B cell (primary cell): ENCODE measurements at regions of chr10 and their contacts with region 1.

Region 1: DNA sequence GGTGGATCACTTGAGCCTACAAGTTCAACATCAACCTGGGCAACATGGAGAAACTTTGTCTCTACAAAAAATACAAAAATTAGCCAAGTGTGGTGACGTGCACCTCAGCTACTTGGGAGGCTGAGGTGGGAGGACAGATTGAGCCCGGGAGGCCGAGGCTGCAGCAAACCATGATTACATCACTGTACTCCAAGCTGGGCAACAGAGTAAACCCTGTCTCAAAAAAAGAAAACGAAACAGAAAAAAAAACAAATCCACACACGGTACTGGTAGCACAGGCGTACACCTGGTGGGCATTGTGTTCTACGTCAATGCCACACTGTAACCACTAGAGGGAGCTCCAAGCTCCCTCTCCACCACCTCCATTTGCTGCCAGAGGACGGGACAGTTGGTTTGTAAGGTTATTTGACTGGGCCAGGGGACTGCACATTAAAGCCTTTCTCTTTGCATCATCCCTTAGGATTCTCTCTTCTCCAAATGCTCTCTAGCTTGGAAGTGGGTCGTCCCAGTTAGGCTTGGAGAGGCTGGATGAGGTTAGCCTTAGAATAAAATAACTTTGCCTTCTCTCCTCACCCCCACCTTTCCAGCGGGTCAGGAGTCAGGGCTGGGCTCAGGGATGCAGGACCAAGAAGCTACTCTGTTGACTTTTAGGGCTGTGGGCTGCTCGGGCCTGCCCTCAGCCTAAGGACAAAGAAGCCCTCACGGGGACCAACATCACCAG is 130.8 kb downstream of the SORBS1 start:
- DNase-seq: peak; percentile 75
- ATAC-seq: peak; percentile 87
- H3K4me3 ChIP-seq: no peak overlapping the region
- H3K4me3 Mint-ChIP-seq: no peak overlapping the region
- H3K27ac ChIP-seq: no peak overlapping the region
- H3K27ac Mint-ChIP-seq: no peak overlapping the region
- H3K4me1 ChIP-seq: peaks cover 0 to 5% of the 10 kb centered on the region in 2 donors
- H3K4me1 Mint-ChIP-seq: no peaks in the 10 kb centered on the region
- H3K27me3 ChIP-seq: peaks cover 0 to 2% (median 0%) of the 10 kb centered on the region in 4 experiments
- H3K27me3 Mint-ChIP-seq: peaks cover 15% of the 10 kb centered on the region
- CTCF ChIP-seq: peak; percentile 90

Region 2: DNA sequence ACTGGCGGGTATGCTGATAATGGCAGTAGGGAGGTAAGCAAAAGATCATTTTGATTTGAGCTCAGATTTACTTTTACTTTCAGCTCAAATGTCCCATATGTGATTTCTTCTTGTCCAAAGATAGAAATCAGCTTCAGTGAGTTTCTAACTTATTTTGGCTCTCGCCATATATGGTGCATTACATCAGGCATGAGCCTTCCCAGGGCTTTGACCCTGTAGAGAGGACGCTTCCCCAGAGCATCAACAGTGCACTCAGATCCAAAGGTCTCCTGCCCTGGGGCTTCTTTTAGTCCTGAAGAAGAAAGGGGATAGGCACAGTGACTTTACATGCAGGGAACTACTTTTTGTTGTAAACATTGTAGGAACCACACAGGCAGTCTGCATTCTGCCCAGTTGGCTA is 11.0 kb before region 1 on chr10:
- CTCF ChIA-PET with region 1: interaction called, 21 read pairs
- POLR2A ChIA-PET with region 1: no interaction called
- intact Hi-C with region 1: no loop called
- DNase-seq: no peak
- ATAC-seq: no peak
- H3K4me3 ChIP-seq: no peak overlapping the region
- H3K4me3 Mint-ChIP-seq: no peak overlapping the region
- H3K27ac ChIP-seq: no peak overlapping the region
- H3K27ac Mint-ChIP-seq: no peak overlapping the region
- H3K4me1 ChIP-seq: no peaks in the 10 kb centered on the region
- H3K4me1 Mint-ChIP-seq: no peaks in the 10 kb centered on the region
- H3K27me3 ChIP-seq: peaks cover 0 to 2% (median 0%) of the 10 kb centered on the region in 4 experiments
- H3K27me3 Mint-ChIP-seq: peaks cover 6% of the 10 kb centered on the region
- CTCF ChIP-seq: no peak

Region 3: DNA sequence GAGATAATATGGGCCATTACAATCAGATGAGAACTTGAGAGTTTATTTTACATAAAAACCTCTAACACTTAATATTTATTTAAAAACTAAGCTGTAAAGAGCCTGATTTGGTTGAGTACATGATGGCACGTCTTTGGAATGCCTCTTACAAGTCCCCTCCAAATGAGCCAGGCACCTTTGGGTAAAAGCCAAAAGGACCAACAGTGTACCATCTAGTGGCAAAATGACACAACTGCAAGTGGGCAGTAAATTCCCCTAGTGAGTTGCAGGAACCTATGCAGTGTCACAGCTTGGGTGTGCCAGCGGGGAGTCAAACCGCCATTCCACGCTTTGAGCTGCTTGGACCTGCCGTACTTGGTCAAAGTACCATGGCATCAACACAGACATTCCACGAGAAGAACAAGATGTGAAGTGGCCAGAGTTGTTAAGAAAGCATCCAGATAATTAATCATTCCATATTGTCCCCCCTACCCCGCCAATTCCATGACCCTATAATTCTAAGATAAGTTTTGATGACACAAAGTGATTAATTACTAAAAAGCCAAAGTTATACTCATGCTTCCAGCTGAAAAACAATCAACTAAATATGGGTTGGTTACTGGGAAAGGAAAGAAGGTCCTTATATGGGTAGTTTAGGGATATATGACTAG is 15.6 kb after region 1 on chr10:
- CTCF ChIA-PET with region 1: interaction called, 59 read pairs
- POLR2A ChIA-PET with region 1: no interaction called
- intact Hi-C with region 1: no loop called
- DNase-seq: peak; percentile 62
- ATAC-seq: peak; percentile 62
- H3K4me3 ChIP-seq: no peak overlapping the region
- H3K4me3 Mint-ChIP-seq: no peak overlapping the region
- H3K27ac ChIP-seq: no peak overlapping the region
- H3K27ac Mint-ChIP-seq: no peak overlapping the region
- H3K4me1 ChIP-seq: no peaks in the 10 kb centered on the region
- H3K4me1 Mint-ChIP-seq: no peaks in the 10 kb centered on the region
- H3K27me3 ChIP-seq: peaks cover 0 to 10% (median 1%) of the 10 kb centered on the region in 4 experiments
- H3K27me3 Mint-ChIP-seq: peaks cover 21% of the 10 kb centered on the region
- CTCF ChIP-seq: peak; percentile 86

Region 4: GRCh38 chr10:95451568-95452524 is 21.5 kb after region 1 on chr10:
- CTCF ChIA-PET with region 1: interaction called, 59 read pairs
- POLR2A ChIA-PET with region 1: no interaction called
- intact Hi-C with region 1: no loop called
- DNase-seq: no peak
- ATAC-seq: no peak
- H3K4me3 ChIP-seq: no peak overlapping the region
- H3K4me3 Mint-ChIP-seq: no peak overlapping the region
- H3K27ac ChIP-seq: no peak overlapping the region
- H3K27ac Mint-ChIP-seq: no peak overlapping the region
- H3K4me1 ChIP-seq: no peaks in the 10 kb centered on the region
- H3K4me1 Mint-ChIP-seq: no peaks in the 10 kb centered on the region
- H3K27me3 ChIP-seq: no peaks in the 10 kb centered on the region
- H3K27me3 Mint-ChIP-seq: peaks cover 13% of the 10 kb centered on the region
- CTCF ChIP-seq: no peak

Region 5: GRCh38 chr10:95601116-95601719 is 170.8 kb after region 1 on chr10:
- CTCF ChIA-PET with region 1: interaction called, 131 read pairs
- POLR2A ChIA-PET with region 1: no interaction called
- intact Hi-C with region 1: no loop called
- DNase-seq: peak; percentile 60
- ATAC-seq: peak; percentile 41
- H3K4me3 ChIP-seq: no peak overlapping the region
- H3K4me3 Mint-ChIP-seq: no peak overlapping the region
- H3K27ac ChIP-seq: no peak overlapping the region
- H3K27ac Mint-ChIP-seq: no peak overlapping the region
- H3K4me1 ChIP-seq: no peaks in the 10 kb centered on the region
- H3K4me1 Mint-ChIP-seq: no peaks in the 10 kb centered on the region
- H3K27me3 ChIP-seq: no peaks in the 10 kb centered on the region
- H3K27me3 Mint-ChIP-seq: peaks cover 8% of the 10 kb centered on the region
- CTCF ChIP-seq: peak; percentile 77

Region 6: DNA sequence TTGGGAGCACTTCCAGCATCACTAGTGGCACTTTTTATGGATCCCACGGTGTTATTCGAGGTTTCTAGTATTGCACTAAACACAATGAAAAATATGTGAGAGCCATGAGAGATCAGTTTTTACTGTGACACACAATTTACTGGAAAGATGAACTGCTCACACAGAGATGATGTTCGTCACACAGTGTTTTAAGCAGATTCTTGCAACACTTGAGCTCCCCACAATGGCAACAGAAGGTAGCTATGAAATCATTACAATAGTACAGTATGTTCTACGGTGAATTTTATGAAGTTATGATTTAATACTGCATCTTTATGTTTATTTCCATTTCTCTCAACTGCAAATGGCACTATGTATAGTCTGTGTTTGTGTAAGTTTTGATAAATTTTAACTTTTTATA is 298.1 kb after region 1 on chr10:
- CTCF ChIA-PET with region 1: no interaction called
- POLR2A ChIA-PET with region 1: no interaction called
- intact Hi-C with region 1: no loop called
- DNase-seq: no peak
- ATAC-seq: peak; percentile 68
- H3K4me3 ChIP-seq: no peak overlapping the region
- H3K4me3 Mint-ChIP-seq: no peak overlapping the region
- H3K27ac ChIP-seq: no peak overlapping the region
- H3K27ac Mint-ChIP-seq: peak overlapping the region; percentile 56
- H3K4me1 ChIP-seq: peaks cover 22 to 25% of the 10 kb centered on the region in 2 donors
- H3K4me1 Mint-ChIP-seq: peaks cover 36% of the 10 kb centered on the region
- H3K27me3 ChIP-seq: no peaks in the 10 kb centered on the region
- H3K27me3 Mint-ChIP-seq: no peaks in the 10 kb centered on the region
- CTCF ChIP-seq: no peak